ENCODE measurements at regions of chr10 and their contacts with region 1.

Region 1: DNA sequence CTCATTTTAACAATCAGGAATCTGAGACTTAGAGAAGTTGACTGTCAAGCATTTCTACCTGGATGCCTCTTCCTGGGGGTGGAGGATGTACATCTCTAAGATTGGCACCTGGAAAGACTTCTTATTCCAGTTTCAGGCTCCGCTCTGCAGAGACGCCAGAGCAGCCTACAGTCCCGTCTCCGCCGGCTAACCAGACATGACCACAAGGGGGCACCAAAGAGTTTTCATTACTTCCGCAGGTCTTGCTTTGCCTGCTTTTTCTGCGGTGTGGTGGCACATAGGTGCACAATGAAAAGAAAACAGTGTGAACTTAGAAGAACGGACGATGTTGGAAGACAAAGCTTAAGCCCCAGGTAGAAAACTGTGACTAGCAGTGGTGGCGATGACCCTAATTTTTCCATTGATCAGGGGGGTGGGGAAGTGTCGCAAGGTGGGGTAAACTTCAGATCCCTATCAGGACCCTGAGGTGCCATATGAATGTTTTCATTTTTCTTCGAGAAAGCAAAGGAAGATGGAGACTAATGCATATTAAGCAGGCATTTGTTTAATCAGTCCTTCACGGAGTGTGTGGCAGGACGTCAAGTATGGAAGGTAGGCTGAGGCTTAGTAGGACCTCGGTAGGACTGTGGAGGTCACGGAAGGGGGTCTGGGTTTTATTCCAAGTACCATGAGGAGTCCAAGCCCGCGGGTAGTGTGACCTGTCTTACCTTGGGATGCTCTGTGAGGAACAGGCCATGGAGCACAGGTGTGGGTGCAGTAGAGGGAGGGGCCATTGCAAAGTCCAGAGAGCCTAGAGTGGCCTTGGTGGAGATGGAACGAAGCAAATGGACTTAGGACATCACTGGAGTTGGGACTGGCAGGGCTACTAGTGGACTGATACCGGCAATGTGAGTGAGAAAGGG is 60.1 kb upstream of the SORCS3 start:
- DNase-seq: peak; percentile 76
- H3K4me3 Mint-ChIP-seq: no peak overlapping the region
- H3K27ac Mint-ChIP-seq: no peak overlapping the region
- H3K4me1 Mint-ChIP-seq: peaks cover 7% of the 10 kb centered on the region
- H3K27me3 Mint-ChIP-seq: peaks cover 16% of the 10 kb centered on the region

Region 2: GRCh38 chr10:104059364-104059763 is 521.7 kb before region 1 on chr10:
- CTCF ChIA-PET with region 1: no interaction called
- POLR2A ChIA-PET with region 1: no interaction called
- intact Hi-C with region 1: no loop called
- DNase-seq: no peak
- H3K4me3 Mint-ChIP-seq: no peak overlapping the region
- H3K27ac Mint-ChIP-seq: no peak overlapping the region
- H3K4me1 Mint-ChIP-seq: no peaks in the 10 kb centered on the region
- H3K27me3 Mint-ChIP-seq: no peaks in the 10 kb centered on the region

Region 3: GRCh38 chr10:104614245-104614831 is 33.3 kb after region 1 on chr10:
- CTCF ChIA-PET with region 1: interaction called, 17 read pairs
- POLR2A ChIA-PET with region 1: no interaction called
- intact Hi-C with region 1: loop called (anchors 1 kb)
- DNase-seq: peak; percentile 51
- H3K4me3 Mint-ChIP-seq: no peak overlapping the region
- H3K27ac Mint-ChIP-seq: no peak overlapping the region
- H3K4me1 Mint-ChIP-seq: no peaks in the 10 kb centered on the region
- H3K27me3 Mint-ChIP-seq: peaks cover 6% of the 10 kb centered on the region

Region 4: GRCh38 chr10:105037022-105037421 is 456.0 kb after region 1 on chr10:
- CTCF ChIA-PET with region 1: no interaction called
- POLR2A ChIA-PET with region 1: no interaction called
- intact Hi-C with region 1: no loop called
- DNase-seq: no peak
- H3K4me3 Mint-ChIP-seq: no peak overlapping the region
- H3K27ac Mint-ChIP-seq: no peak overlapping the region
- H3K4me1 Mint-ChIP-seq: no peaks in the 10 kb centered on the region
- H3K27me3 Mint-ChIP-seq: no peaks in the 10 kb centered on the region